ENCODE measurements at regions of chr2 and their contacts with region 1.

Region 1: GRCh38 chr2:16756831-16757644 is 91.4 kb upstream of the CYRIA start:
- DNase-seq: peak; percentile 86
- ATAC-seq: peak; percentile 95
- H3K4me3 ChIP-seq: no peak overlapping the region
- H3K4me3 Mint-ChIP-seq: peak overlapping the region; percentile 17
- H3K27ac ChIP-seq: no peak overlapping the region
- H3K27ac Mint-ChIP-seq: peak overlapping the region; percentile 28
- H3K4me1 ChIP-seq: peaks cover 3 to 4% of the 10 kb centered on the region in 2 donors
- H3K4me1 Mint-ChIP-seq: peaks cover 5% of the 10 kb centered on the region
- H3K27me3 ChIP-seq: no peaks in the 10 kb centered on the region
- H3K27me3 Mint-ChIP-seq: peaks cover 5% of the 10 kb centered on the region
- CTCF ChIP-seq: peak; percentile 86

Region 2: GRCh38 chr2:16608661-16609643 is 148.1 kb before region 1 on chr2:
- CTCF ChIA-PET with region 1: interaction called, 191 read pairs
- POLR2A ChIA-PET with region 1: interaction called, 8 read pairs
- intact Hi-C with region 1: loop called (anchors 1 kb)
- DNase-seq: peak; percentile 86
- ATAC-seq: peak; percentile 95
- H3K4me3 ChIP-seq: peak overlapping the region; percentile 38 to 66 (median 60)
- H3K4me3 Mint-ChIP-seq: peak overlapping the region; percentile 87
- H3K27ac ChIP-seq: no peak overlapping the region
- H3K27ac Mint-ChIP-seq: peak overlapping the region; percentile 53
- H3K4me1 ChIP-seq: peaks cover 4 to 13% of the 10 kb centered on the region in 2 donors
- H3K4me1 Mint-ChIP-seq: peaks cover 27% of the 10 kb centered on the region
- H3K27me3 ChIP-seq: no peaks in the 10 kb centered on the region
- H3K27me3 Mint-ChIP-seq: no peaks in the 10 kb centered on the region
- CTCF ChIP-seq: peak; percentile 91

Region 3: GRCh38 chr2:16635791-16636699 is 121.0 kb before region 1 on chr2:
- CTCF ChIA-PET with region 1: interaction called, 242 read pairs
- POLR2A ChIA-PET with region 1: no interaction called
- intact Hi-C with region 1: no loop called
- DNase-seq: peak; percentile 37
- ATAC-seq: peak; percentile 55
- H3K4me3 ChIP-seq: no peak overlapping the region
- H3K4me3 Mint-ChIP-seq: peak overlapping the region; percentile 37
- H3K27ac ChIP-seq: no peak overlapping the region
- H3K27ac Mint-ChIP-seq: peak overlapping the region; percentile 69
- H3K4me1 ChIP-seq: peaks cover 31 to 79% of the 10 kb centered on the region in 2 donors
- H3K4me1 Mint-ChIP-seq: peaks cover 93% of the 10 kb centered on the region
- H3K27me3 ChIP-seq: no peaks in the 10 kb centered on the region
- H3K27me3 Mint-ChIP-seq: no peaks in the 10 kb centered on the region
- CTCF ChIP-seq: no peak

Region 4: GRCh38 chr2:16665748-16666448 is 91.1 kb before region 1 on chr2 and contains the start of gene CYRIA:
- CTCF ChIA-PET with region 1: interaction called, 17 read pairs
- POLR2A ChIA-PET with region 1: no interaction called
- intact Hi-C with region 1: no loop called
- DNase-seq: peak; percentile 82
- ATAC-seq: peak; percentile 71
- H3K4me3 ChIP-seq: peak within 1 kb of the TSS; percentile 55 to 97 (median 91)
- H3K4me3 Mint-ChIP-seq: peak within 1 kb of the TSS; percentile 92
- H3K27ac ChIP-seq: peak within 1 kb of the TSS; percentile 72 to 87
- H3K27ac Mint-ChIP-seq: peak within 1 kb of the TSS; percentile 95
- H3K4me1 ChIP-seq: peaks cover 43 to 53% of the 10 kb centered on the region in 2 donors
- H3K4me1 Mint-ChIP-seq: peaks cover 55% of the 10 kb centered on the region
- H3K27me3 ChIP-seq: no peaks in the 10 kb centered on the region
- H3K27me3 Mint-ChIP-seq: no peaks in the 10 kb centered on the region
- CTCF ChIP-seq: no peak
- total RNA-seq, gene CYRIA: 58.8 and 59.0 TPM in 2 replicates

Region 5: DNA sequence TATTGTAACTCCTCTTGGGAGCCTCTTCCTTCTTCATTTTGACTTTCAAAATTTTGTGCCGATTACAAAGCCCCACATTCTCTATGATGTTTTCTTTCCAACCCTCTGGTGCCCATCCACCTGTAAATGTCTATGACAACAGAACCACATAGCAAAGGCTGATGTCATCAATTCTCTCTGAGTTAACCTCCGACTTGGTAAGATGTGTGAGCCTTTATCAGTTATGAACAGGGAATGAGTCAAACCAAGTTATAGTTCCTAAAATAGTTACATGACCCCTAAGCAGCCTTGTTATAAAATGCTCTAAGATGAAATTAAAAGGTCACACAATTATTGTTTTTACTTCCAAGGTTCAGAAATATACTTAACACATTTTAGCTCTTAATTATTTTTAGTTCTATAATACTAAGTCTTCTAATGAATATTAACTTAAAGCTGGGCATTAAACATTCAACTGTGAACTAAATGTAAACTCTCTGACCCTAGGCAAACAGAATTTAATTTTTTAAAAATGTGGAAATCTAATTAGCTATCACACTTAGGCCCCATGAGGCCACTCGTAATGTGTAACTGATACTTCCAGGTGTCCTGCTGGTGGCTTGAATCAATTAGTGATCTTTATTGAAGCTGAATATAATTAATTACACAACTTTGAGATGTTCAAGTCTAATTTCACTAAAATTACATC is 10.9 kb after region 1 on chr2:
- CTCF ChIA-PET with region 1: interaction called, 22 read pairs
- POLR2A ChIA-PET with region 1: no interaction called
- intact Hi-C with region 1: no loop called
- DNase-seq: no peak
- ATAC-seq: no peak
- H3K4me3 ChIP-seq: no peak overlapping the region
- H3K4me3 Mint-ChIP-seq: no peak overlapping the region
- H3K27ac ChIP-seq: no peak overlapping the region
- H3K27ac Mint-ChIP-seq: no peak overlapping the region
- H3K4me1 ChIP-seq: no peaks in the 10 kb centered on the region
- H3K4me1 Mint-ChIP-seq: peaks cover 8% of the 10 kb centered on the region
- H3K27me3 ChIP-seq: peaks cover 0 to 4% (median 0%) of the 10 kb centered on the region in 4 experiments
- H3K27me3 Mint-ChIP-seq: peaks cover 22% of the 10 kb centered on the region
- CTCF ChIP-seq: no peak

Region 6: GRCh38 chr2:16900405-16901025 is 143.5 kb after region 1 on chr2:
- CTCF ChIA-PET with region 1: no interaction called
- POLR2A ChIA-PET with region 1: no interaction called
- intact Hi-C with region 1: no loop called
- DNase-seq: peak; percentile 20
- ATAC-seq: no peak
- H3K4me3 ChIP-seq: no peak overlapping the region
- H3K4me3 Mint-ChIP-seq: no peak overlapping the region
- H3K27ac ChIP-seq: no peak overlapping the region
- H3K27ac Mint-ChIP-seq: no peak overlapping the region
- H3K4me1 ChIP-seq: no peaks in the 10 kb centered on the region
- H3K4me1 Mint-ChIP-seq: no peaks in the 10 kb centered on the region
- H3K27me3 ChIP-seq: no peaks in the 10 kb centered on the region
- H3K27me3 Mint-ChIP-seq: no peaks in the 10 kb centered on the region
- CTCF ChIP-seq: peak; percentile 50

Measured in B cell (primary cell).